GM18951 (cell line): ENCODE measurements at regions of chr13 and their contacts with region 1.

Region 1: DNA sequence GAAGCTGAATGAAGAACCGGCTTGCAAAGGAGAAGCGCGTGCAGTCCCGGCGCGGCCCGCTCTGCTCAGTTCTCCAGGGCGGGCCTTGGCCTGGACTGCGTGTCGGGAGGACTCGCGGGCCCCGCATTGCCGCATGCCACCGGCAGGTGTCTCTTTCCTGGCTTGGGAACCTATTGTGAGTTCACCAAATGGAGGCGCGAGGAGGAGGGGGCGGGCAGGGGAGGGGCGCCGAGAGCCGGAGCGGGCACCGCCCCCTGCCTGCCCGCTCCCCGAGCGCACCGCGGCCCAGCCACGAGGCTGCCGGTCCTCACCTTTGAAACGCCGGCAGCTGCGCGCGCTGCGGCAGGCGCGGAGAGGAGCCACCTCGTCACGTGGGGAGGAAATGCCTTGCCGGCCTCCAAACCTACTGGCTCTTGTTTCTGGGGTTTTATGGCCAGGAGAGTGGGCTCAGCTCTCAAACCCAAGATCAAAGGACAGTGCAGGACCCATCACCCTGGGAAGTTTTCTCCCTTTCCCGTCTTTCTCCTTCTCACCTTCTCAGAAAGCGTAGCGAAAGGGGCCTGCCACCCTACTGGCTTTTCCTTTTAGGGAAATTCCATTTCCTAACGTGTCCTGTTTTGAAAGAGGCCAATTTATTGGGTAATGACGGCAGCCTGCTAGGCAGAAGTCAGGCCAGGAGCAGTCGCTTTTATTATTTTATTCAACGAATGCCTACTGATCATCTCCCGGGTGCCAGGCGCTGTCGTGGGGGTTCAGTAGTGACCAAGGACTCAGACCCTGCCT is 13.8 kb upstream of the UBE2L5 start:
- POLR2A ChIP-seq: peak; percentile 53

Region 2: GRCh38 chr13:30453727-30454126 is 45.2 kb after region 1 on chr13:
- in situ Hi-C with region 1: loop called (anchors 10 kb)
- POLR2A ChIP-seq: no peak

Region 3: DNA sequence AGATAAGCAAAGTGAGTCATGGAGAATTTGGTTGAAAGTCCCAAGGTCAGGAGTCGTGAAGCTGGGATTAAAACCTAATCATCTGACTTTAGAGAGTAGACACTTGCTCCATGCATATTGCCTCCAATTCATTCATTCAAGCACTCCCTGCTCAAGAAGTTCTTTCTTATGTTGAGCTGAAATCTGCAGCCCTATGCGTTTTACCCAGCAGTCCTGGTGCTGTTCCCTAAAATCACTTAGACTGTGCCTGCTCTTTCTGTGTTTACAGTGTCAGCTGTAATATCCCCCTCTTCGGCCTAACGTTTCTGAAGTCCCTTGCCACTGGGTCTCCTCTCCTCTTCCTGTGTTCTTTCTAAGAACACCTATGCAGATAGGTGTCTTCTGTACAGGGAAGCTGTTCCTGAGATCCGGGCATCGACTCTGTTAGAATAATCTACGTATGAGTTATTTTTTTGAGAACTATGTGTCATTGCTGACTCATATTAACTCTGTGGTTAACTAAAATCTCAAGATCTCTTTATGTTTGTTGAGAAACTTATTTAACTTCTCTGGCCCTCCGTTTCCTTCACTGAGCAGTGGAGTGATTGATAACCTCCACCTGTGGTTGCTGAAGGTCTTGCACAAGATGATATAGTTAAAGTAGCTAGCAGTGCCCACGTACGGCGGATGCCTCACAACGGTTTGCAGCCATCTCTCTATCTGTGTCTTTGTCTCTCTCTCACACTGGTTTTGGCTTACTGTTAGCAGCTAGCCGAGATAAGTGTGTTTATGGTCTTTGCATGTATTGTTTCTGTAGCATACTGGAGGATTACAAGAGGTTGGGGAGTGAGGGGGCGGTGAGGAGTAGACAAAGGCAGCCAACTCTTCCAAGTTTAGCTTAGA is 331.5 kb after region 1 on chr13:
- in situ Hi-C with region 1: no loop called
- POLR2A ChIP-seq: no peak